Mammary epithelial cell (primary cell): ENCODE measurements at regions of chr9 and their contacts with region 1.

Region 1: GRCh38 chr9:78439190-78439865 is 142.4 kb downstream of the PSAT1 start:
- DNase-seq: peak; percentile 64
- H3K4me3 ChIP-seq: no peak overlapping the region
- H3K27ac ChIP-seq: no peak overlapping the region
- H3K4me1 ChIP-seq: no peaks in the 10 kb centered on the region
- H3K27me3 ChIP-seq: peaks cover 2% of the 10 kb centered on the region
- CTCF ChIP-seq: peak; percentile 93 to 94

Region 2: GRCh38 chr9:78369639-78370219 is 69.6 kb before region 1 on chr9:
- CTCF ChIA-PET with region 1: no interaction called
- dilution Hi-C with region 1: no loop called
- in situ Hi-C with region 1: no loop called
- intact Hi-C with region 1: loop called (anchors 2 kb)
- DNase-seq: peak; percentile 42
- H3K4me3 ChIP-seq: no peak overlapping the region
- H3K27ac ChIP-seq: no peak overlapping the region
- H3K4me1 ChIP-seq: no peaks in the 10 kb centered on the region
- H3K27me3 ChIP-seq: no peaks in the 10 kb centered on the region
- CTCF ChIP-seq: peak; percentile 83 to 93

Region 3: GRCh38 chr9:78601957-78602565 is 162.7 kb after region 1 on chr9:
- CTCF ChIA-PET with region 1: no interaction called
- dilution Hi-C with region 1: no loop called
- in situ Hi-C with region 1: no loop called
- intact Hi-C with region 1: loop called (anchors 2 kb)
- DNase-seq: peak; percentile 75
- H3K4me3 ChIP-seq: peak overlapping the region in 1 of 3 experiments; percentile 2
- H3K27ac ChIP-seq: peak overlapping the region; percentile 31
- H3K4me1 ChIP-seq: peaks cover 6% of the 10 kb centered on the region
- H3K27me3 ChIP-seq: no peaks in the 10 kb centered on the region
- CTCF ChIP-seq: peak; percentile 87 to 93

Region 4: DNA sequence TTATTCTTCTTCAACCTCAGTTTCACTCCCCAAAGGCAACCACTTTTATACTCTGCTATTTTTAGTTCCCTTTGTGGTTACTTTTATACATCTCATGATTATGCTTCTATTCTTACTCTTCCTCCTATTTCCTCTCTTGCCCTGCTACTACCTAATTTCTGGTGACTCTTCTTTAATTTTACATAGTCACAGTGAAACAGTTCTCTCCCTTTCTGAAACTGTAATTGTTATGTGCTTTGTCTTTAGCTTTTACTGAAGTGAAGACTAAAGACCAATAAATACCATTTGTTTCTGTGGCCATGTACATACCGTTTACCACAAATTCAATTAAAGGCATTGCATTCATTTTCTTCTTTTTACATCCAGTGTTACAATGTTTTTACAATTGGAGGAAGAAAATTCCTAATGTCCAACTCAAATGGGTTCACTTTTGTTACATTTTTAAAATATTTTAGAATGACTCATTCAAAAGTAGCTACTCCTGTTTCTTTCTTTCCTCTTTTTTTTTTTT is 268.2 kb after region 1 on chr9:
- CTCF ChIA-PET with region 1: no interaction called
- dilution Hi-C with region 1: no loop called
- in situ Hi-C with region 1: no loop called
- intact Hi-C with region 1: loop called (anchors 1 kb)
- DNase-seq: peak; percentile 23
- H3K4me3 ChIP-seq: no peak overlapping the region
- H3K27ac ChIP-seq: no peak overlapping the region
- H3K4me1 ChIP-seq: no peaks in the 10 kb centered on the region
- H3K27me3 ChIP-seq: no peaks in the 10 kb centered on the region
- CTCF ChIP-seq: no peak

Region 5: DNA sequence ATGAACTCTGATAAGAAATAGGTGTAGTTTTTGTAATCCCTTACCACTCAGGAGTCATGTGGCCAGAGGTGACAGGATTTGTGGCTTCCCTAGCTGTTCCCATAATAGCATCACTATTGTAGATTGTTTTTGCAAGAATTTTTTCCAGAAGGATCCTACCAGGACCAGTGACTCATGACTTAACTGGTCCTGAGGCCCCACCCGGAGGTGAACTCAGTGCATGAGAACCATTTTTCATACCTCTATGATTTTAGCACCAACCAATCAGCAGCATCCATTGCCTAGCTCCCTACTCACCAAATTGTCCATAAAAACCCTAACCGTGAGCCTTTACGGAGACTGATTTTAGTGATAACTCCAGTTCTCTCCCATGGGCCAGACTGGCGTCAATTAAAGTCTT is 342.4 kb after region 1 on chr9:
- CTCF ChIA-PET with region 1: interaction called, 3 read pairs
- dilution Hi-C with region 1: no loop called
- in situ Hi-C with region 1: no loop called
- intact Hi-C with region 1: loop called (anchors 1 kb)
- DNase-seq: peak; percentile 41
- H3K4me3 ChIP-seq: no peak overlapping the region
- H3K27ac ChIP-seq: no peak overlapping the region
- H3K4me1 ChIP-seq: no peaks in the 10 kb centered on the region
- H3K27me3 ChIP-seq: no peaks in the 10 kb centered on the region
- CTCF ChIP-seq: peak in 1 of 2 donors; percentile 33

Region 6: DNA sequence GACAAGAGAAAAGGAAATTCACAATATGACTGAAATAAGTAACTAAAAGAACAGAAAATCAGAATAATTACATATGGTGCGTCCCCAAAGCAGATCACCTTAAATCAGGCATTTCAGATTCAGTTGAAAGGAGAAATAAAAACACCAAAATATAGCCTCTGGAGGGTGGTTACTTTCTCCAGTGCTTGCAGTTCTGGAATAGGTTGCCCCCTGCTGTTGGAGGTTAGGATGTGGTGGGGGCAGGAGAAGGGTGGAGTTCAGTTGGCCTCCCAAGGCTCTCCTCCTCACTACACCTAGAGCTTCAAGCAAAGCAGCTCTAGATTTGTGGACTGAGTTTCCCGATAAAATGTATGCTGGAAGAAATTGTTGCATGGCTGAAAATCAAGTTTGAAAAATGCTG is 794.2 kb after region 1 on chr9:
- CTCF ChIA-PET with region 1: no interaction called
- dilution Hi-C with region 1: no loop called
- in situ Hi-C with region 1: no loop called
- intact Hi-C with region 1: loop called (anchors 1 kb)
- DNase-seq: peak; percentile 46
- H3K4me3 ChIP-seq: no peak overlapping the region
- H3K27ac ChIP-seq: no peak overlapping the region
- H3K4me1 ChIP-seq: no peaks in the 10 kb centered on the region
- H3K27me3 ChIP-seq: no peaks in the 10 kb centered on the region
- CTCF ChIP-seq: peak; percentile 78 to 79